ENCODE measurements at regions of chr15 and their contacts with region 1.

Region 1: GRCh38 chr15:90001683-90002427 is 731 bp downstream of the ZNF710 start:
- DNase-seq: peak; percentile 36 to 55 (median 50)
- H3K4me3 ChIP-seq: peak overlapping the region; percentile 62 to 92 (median 73)
- H3K4me3 Mint-ChIP-seq: peak overlapping the region; percentile 86 to 95
- H3K27ac ChIP-seq: peak overlapping the region; percentile 98 to 99
- H3K27ac Mint-ChIP-seq: peak overlapping the region; percentile 76 to 100 (median 99)
- H3K4me1 ChIP-seq: peaks cover 67 to 72% of the 10 kb centered on the region in 2 donors
- H3K4me1 Mint-ChIP-seq: peaks cover 68% of the 10 kb centered on the region
- H3K27me3 ChIP-seq: no peaks in the 10 kb centered on the region
- H3K27me3 Mint-ChIP-seq: peaks cover 0 to 2% (median 0%) of the 10 kb centered on the region in 3 donors
- CTCF ChIP-seq: no peak

Region 2: GRCh38 chr15:89893696-89894455 is 108.0 kb before region 1 on chr15 and contains the start of gene AP3S2:
- intact Hi-C with region 1: loop called in 1 of 2 experiments (anchors 10 kb)
- DNase-seq: peak; percentile 90 to 94 (median 92)
- H3K4me3 ChIP-seq: peak within 1 kb of the TSS; percentile 70 to 97 (median 75)
- H3K4me3 Mint-ChIP-seq: peak within 1 kb of the TSS; percentile 95 to 98
- H3K27ac ChIP-seq: peak within 1 kb of the TSS; percentile 94 to 99
- H3K27ac Mint-ChIP-seq: peak within 1 kb of the TSS; percentile 98 to 100 (median 99)
- H3K4me1 ChIP-seq: peaks cover 35 to 57% of the 10 kb centered on the region in 2 donors
- H3K4me1 Mint-ChIP-seq: peaks cover 48% of the 10 kb centered on the region
- H3K27me3 ChIP-seq: no peaks in the 10 kb centered on the region
- H3K27me3 Mint-ChIP-seq: peaks cover 0 to 3% (median 1%) of the 10 kb centered on the region in 3 donors
- CTCF ChIP-seq: no peak
- polyA plus RNA-seq, gene AP3S2: 30.8 to 41.2 (median 32.4) TPM

Region 3: DNA sequence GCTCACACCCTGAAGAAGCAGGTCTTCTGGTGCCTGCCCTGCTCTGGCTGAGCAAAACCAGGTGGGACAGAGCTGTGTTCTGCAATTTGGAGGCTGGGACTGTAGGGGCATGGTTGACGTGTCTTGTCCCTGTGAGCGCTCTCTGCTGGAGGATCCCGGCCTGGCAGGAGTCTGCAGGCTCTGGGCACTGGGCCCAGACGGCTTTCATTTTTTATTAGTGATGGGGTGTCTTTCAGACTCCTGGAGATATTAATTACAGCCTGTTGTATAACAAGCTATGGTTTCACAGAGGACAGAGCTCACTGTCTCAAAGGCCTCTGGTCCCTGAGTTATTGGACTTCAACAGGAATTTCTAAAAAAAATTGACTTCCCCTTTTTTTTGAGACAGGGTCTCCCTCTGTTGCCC is 30.3 kb before region 1 on chr15:
- intact Hi-C with region 1: loop called in 1 of 2 experiments (anchors 5 kb)
- DNase-seq: no peak
- H3K4me3 ChIP-seq: no peak overlapping the region
- H3K4me3 Mint-ChIP-seq: no peak overlapping the region
- H3K27ac ChIP-seq: peak overlapping the region; percentile 55 to 75
- H3K27ac Mint-ChIP-seq: peak overlapping the region; percentile 72 to 97 (median 86)
- H3K4me1 ChIP-seq: peaks cover 70 to 81% of the 10 kb centered on the region in 2 donors
- H3K4me1 Mint-ChIP-seq: peaks cover 84% of the 10 kb centered on the region
- H3K27me3 ChIP-seq: no peaks in the 10 kb centered on the region
- H3K27me3 Mint-ChIP-seq: peaks cover 0 to 2% (median 0%) of the 10 kb centered on the region in 3 donors
- CTCF ChIP-seq: peak; percentile 24

Region 4: DNA sequence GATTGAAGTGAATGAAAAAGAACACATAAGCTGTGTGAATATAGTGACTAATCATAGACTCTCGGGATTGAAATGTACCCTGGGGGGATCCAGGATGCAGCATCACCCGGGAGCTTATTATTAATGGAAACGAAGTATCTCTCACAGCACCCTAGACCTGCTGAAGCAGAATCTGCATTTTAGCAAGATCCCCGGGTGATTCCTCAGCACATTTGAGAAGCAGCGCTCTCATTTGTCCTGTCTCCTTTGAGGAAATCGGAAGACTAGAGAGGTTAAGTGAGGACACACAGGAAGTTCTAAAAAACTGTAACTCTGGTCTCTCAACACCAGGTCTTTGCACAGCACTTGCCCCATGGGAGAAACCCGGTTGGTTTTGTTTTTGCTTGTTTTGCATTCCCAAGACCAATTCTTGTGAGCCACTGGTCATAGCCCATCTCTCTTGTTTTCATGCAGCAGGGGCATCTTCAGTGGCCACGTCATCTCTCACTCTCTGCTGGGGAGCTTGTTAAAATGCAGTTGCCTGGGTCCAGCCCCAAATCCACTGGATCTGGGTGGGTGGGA is 29.5 kb after region 1 on chr15:
- intact Hi-C with region 1: loop called (anchors 5 kb)
- DNase-seq: peak; percentile 60 to 85 (median 82)
- H3K4me3 ChIP-seq: peak overlapping the region in 1 of 3 experiments; percentile 19
- H3K4me3 Mint-ChIP-seq: peak overlapping the region; percentile 41 to 69
- H3K27ac ChIP-seq: peak overlapping the region; percentile 76 to 97
- H3K27ac Mint-ChIP-seq: peak overlapping the region; percentile 79 to 94 (median 90)
- H3K4me1 ChIP-seq: peaks cover 80 to 85% of the 10 kb centered on the region in 2 donors
- H3K4me1 Mint-ChIP-seq: peaks cover 75% of the 10 kb centered on the region
- H3K27me3 ChIP-seq: no peaks in the 10 kb centered on the region
- H3K27me3 Mint-ChIP-seq: peaks cover 0 to 2% (median 2%) of the 10 kb centered on the region in 3 donors
- CTCF ChIP-seq: no peak

Region 5: GRCh38 chr15:90037961-90038631 is 36.2 kb after region 1 on chr15:
- intact Hi-C with region 1: loop called (anchors 5 kb)
- DNase-seq: peak; percentile 64 to 75 (median 73)
- H3K4me3 ChIP-seq: peak overlapping the region in 1 of 3 experiments; percentile 39
- H3K4me3 Mint-ChIP-seq: no peak overlapping the region
- H3K27ac ChIP-seq: peak overlapping the region; percentile 91 to 97
- H3K27ac Mint-ChIP-seq: peak overlapping the region; percentile 93 to 99 (median 98)
- H3K4me1 ChIP-seq: peaks cover 80 to 89% of the 10 kb centered on the region in 2 donors
- H3K4me1 Mint-ChIP-seq: peaks cover 87% of the 10 kb centered on the region
- H3K27me3 ChIP-seq: no peaks in the 10 kb centered on the region
- H3K27me3 Mint-ChIP-seq: peaks cover 0 to 2% (median 2%) of the 10 kb centered on the region in 3 donors
- CTCF ChIP-seq: no peak

Region 6: DNA sequence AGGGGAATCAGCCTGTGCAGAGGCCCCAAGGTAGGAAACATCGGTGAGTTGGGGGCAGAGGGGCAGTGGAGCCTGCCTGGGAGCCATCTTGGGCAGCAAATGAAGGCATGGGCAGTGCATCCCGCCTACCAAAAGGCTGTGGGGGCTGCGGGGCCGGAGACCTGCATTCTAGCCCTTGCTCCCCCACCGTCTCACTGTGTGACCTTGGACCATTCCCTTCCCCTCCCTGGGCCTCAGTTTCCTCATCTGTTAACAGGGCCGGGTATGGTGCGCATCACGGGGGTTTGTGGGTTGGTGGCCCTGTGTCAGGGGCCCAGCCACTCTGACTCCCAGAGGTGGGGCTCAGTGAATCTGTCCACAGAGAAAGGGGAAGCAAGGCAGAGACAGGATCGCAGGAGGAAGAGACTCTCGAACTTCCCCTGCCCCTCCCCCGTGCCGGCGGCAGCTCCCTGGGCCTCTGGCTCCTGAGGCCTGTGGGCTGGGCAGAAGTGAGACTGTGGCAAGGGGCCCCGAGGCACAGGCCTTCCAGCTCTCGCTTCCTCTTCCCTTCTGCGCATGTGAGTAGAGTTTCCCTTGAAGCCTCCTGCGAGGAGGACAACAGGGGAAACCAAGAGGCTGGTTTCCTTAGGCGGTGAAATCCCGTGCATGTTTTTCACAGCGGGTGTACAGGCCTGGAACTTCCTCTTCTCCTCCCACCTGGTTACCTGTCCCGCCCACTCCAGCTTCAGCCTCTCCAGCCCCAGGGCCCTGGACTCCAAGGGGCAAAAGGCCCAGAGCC is 57.5 kb after region 1 on chr15:
- intact Hi-C with region 1: loop called (anchors 2 to 5 kb)
- DNase-seq: peak; percentile 99 to 100 (median 99)
- H3K4me3 ChIP-seq: peak overlapping the region in 1 of 3 experiments; percentile 22
- H3K4me3 Mint-ChIP-seq: peak overlapping the region in 1 of 2 donors; percentile 46
- H3K27ac ChIP-seq: peak overlapping the region; percentile 91 to 96
- H3K27ac Mint-ChIP-seq: peak overlapping the region; percentile 95 to 99 (median 97)
- H3K4me1 ChIP-seq: peaks cover 90 to 94% of the 10 kb centered on the region in 2 donors
- H3K4me1 Mint-ChIP-seq: peaks cover 90% of the 10 kb centered on the region
- H3K27me3 ChIP-seq: no peaks in the 10 kb centered on the region
- H3K27me3 Mint-ChIP-seq: peaks cover 0 to 4% (median 0%) of the 10 kb centered on the region in 3 donors
- CTCF ChIP-seq: no peak

Region 7: DNA sequence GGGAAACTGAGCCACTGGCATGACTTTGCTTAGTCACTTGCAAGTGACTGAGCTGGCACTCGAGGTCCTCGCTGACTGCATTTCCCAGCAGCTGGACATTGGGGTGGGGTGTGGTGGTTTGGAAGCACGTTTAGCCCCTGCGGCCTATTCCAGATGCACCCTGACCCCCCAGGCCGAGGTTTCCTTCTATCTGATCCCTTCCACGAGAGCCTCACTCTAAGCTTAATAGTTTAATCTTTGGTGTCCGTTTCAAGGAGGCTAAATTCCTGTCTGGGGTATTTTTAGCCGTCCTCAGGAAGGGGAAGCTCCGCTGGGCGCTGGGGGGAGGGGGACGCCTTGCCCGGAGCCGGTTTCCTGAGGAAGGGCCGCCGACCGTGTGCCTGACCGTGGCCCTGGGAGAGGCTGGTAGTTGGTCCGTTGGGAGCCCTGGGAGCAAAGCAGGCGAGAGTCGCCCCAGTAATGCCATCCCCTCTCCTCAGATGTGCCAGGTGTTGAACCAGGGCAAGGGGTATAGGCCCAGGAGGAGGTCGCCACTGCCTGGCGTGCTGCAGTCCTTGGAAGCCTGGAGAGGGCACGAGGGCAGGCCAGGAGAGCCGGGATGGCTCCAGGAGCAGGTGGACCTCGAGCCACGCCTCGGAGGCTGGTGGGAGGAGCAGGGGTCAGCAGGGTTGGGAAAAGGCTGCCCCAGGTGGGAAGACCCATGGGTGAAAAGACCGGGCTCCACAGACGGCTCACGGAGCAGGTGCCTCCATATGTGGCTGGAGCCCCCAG is 63.2 kb after region 1 on chr15:
- intact Hi-C with region 1: loop called in 1 of 2 experiments (anchors 5 kb)
- DNase-seq: peak; percentile 61 to 80 (median 77)
- H3K4me3 ChIP-seq: peak overlapping the region in 1 of 3 experiments; percentile 62
- H3K4me3 Mint-ChIP-seq: peak overlapping the region; percentile 60 to 74
- H3K27ac ChIP-seq: peak overlapping the region; percentile 91 to 96
- H3K27ac Mint-ChIP-seq: peak overlapping the region; percentile 95 to 99 (median 97)
- H3K4me1 ChIP-seq: peaks cover 78 to 93% of the 10 kb centered on the region in 2 donors
- H3K4me1 Mint-ChIP-seq: peaks cover 74% of the 10 kb centered on the region
- H3K27me3 ChIP-seq: no peaks in the 10 kb centered on the region
- H3K27me3 Mint-ChIP-seq: peaks cover 0 to 4% (median 0%) of the 10 kb centered on the region in 3 donors
- CTCF ChIP-seq: no peak